ENCODE measurements at regions of chr10 and their contacts with region 1.

Region 1: GRCh38 chr10:117216611-117217195 is 19.4 kb downstream of the KCNK18 start:
- DNase-seq: peak; percentile 53 to 74 (median 60)
- H3K4me3 ChIP-seq: peak overlapping the region; percentile 63
- H3K4me3 Mint-ChIP-seq: peak overlapping the region; percentile 26 to 84 (median 72)
- H3K27ac ChIP-seq: no peak overlapping the region
- H3K27ac Mint-ChIP-seq: no peak overlapping the region
- H3K4me1 ChIP-seq: peaks cover 7% of the 10 kb centered on the region
- H3K4me1 Mint-ChIP-seq: peaks cover 0 to 18% (median 5%) of the 10 kb centered on the region in 3 donors
- H3K27me3 ChIP-seq: peaks cover 9% of the 10 kb centered on the region
- H3K27me3 Mint-ChIP-seq: peaks cover 15 to 31% of the 10 kb centered on the region in 2 donors

Region 2: GRCh38 chr10:117014835-117015234 is 201.9 kb before region 1 on chr10:
- CTCF ChIA-PET with region 1: no interaction called
- POLR2A ChIA-PET with region 1: no interaction called
- DNase-seq: no peak
- H3K4me3 ChIP-seq: no peak overlapping the region
- H3K4me3 Mint-ChIP-seq: no peak overlapping the region
- H3K27ac ChIP-seq: no peak overlapping the region
- H3K27ac Mint-ChIP-seq: no peak overlapping the region
- H3K4me1 ChIP-seq: no peaks in the 10 kb centered on the region
- H3K4me1 Mint-ChIP-seq: no peaks in the 10 kb centered on the region
- H3K27me3 ChIP-seq: no peaks in the 10 kb centered on the region
- H3K27me3 Mint-ChIP-seq: no peaks in the 10 kb centered on the region

Region 3: GRCh38 chr10:117131376-117132327 is 85.1 kb before region 1 on chr10:
- CTCF ChIA-PET with region 1: no interaction called
- POLR2A ChIA-PET with region 1: no interaction called
- DNase-seq: no peak
- H3K4me3 ChIP-seq: peak overlapping the region; percentile 22
- H3K4me3 Mint-ChIP-seq: peak overlapping the region in 6 of 7 donors; percentile 30 to 76 (median 64)
- H3K27ac ChIP-seq: no peak overlapping the region
- H3K27ac Mint-ChIP-seq: no peak overlapping the region
- H3K4me1 ChIP-seq: peaks cover 14% of the 10 kb centered on the region
- H3K4me1 Mint-ChIP-seq: peaks cover 24 to 44% (median 32%) of the 10 kb centered on the region in 3 donors
- H3K27me3 ChIP-seq: peaks cover 39% of the 10 kb centered on the region
- H3K27me3 Mint-ChIP-seq: peaks cover 75 to 85% of the 10 kb centered on the region in 2 donors

Region 4: DNA sequence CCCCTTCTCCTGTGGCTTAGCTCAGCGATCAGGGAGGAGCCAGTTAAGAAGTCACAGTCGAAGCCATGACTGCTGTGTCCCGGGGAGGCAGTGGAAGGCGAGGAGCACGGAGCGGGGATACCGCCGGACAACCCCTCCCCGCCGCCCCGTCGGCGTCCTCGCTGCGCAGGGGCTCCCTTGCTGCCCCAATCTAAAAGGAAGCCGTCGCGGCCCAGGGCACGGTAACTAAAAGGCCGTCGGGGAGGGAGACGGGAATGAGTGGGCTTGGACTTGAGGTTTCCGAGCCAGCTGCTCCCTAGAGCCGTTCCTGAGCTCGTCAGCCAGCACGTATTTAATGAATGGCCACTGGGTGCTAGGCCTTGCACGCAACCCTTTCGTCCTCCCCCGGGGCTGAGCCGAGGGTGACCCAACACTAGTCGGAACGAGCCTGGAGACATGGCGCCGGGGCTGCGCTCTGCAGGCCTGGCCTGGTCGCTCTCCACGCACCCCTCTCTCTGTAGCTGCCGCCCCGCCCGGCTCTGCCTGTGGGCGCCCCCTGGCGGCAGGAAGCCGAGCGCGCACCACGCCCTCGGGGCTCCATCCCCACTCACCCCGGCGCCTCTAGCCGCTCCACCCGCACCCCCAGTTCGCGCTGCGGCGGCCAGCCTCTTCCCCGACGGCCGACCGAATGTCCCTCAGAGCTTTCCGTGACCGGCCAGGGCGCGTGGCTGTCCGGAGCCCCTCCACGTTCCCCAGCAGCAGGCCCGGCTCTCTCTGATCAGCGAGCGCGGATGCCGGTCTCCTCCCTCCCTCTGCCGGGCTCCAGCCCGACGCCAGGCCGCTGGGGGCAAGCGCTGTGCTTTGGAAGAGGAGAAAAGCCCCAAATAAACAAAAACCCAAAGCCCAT is 48.7 kb before region 1 on chr10:
- CTCF ChIA-PET with region 1: interaction called, 11 read pairs
- POLR2A ChIA-PET with region 1: no interaction called
- DNase-seq: peak; percentile 39 to 68 (median 49)
- H3K4me3 ChIP-seq: peak overlapping the region; percentile 28
- H3K4me3 Mint-ChIP-seq: peak overlapping the region in 5 of 7 donors; percentile 45 to 88 (median 66)
- H3K27ac ChIP-seq: no peak overlapping the region
- H3K27ac Mint-ChIP-seq: no peak overlapping the region
- H3K4me1 ChIP-seq: peaks cover 13% of the 10 kb centered on the region
- H3K4me1 Mint-ChIP-seq: peaks cover 19 to 46% (median 30%) of the 10 kb centered on the region in 3 donors
- H3K27me3 ChIP-seq: peaks cover 71% of the 10 kb centered on the region
- H3K27me3 Mint-ChIP-seq: peaks cover 64 to 71% of the 10 kb centered on the region in 2 donors

Region 5: GRCh38 chr10:117204316-117204715 is 12.4 kb before region 1 on chr10:
- CTCF ChIA-PET with region 1: interaction called, 25 read pairs
- POLR2A ChIA-PET with region 1: no interaction called
- DNase-seq: no peak
- H3K4me3 ChIP-seq: no peak overlapping the region
- H3K4me3 Mint-ChIP-seq: no peak overlapping the region
- H3K27ac ChIP-seq: no peak overlapping the region
- H3K27ac Mint-ChIP-seq: no peak overlapping the region
- H3K4me1 ChIP-seq: no peaks in the 10 kb centered on the region
- H3K4me1 Mint-ChIP-seq: no peaks in the 10 kb centered on the region
- H3K27me3 ChIP-seq: no peaks in the 10 kb centered on the region
- H3K27me3 Mint-ChIP-seq: peaks cover 15 to 37% of the 10 kb centered on the region in 2 donors

Region 6: GRCh38 chr10:117226824-117227451 is 10.2 kb after region 1 on chr10:
- CTCF ChIA-PET with region 1: interaction called, 27 read pairs
- POLR2A ChIA-PET with region 1: no interaction called
- DNase-seq: no peak
- H3K4me3 ChIP-seq: no peak overlapping the region
- H3K4me3 Mint-ChIP-seq: no peak overlapping the region
- H3K27ac ChIP-seq: peak overlapping the region; percentile 2
- H3K27ac Mint-ChIP-seq: no peak overlapping the region
- H3K4me1 ChIP-seq: no peaks in the 10 kb centered on the region
- H3K4me1 Mint-ChIP-seq: no peaks in the 10 kb centered on the region
- H3K27me3 ChIP-seq: no peaks in the 10 kb centered on the region
- H3K27me3 Mint-ChIP-seq: peaks cover 34 to 45% of the 10 kb centered on the region in 2 donors

Region 7: DNA sequence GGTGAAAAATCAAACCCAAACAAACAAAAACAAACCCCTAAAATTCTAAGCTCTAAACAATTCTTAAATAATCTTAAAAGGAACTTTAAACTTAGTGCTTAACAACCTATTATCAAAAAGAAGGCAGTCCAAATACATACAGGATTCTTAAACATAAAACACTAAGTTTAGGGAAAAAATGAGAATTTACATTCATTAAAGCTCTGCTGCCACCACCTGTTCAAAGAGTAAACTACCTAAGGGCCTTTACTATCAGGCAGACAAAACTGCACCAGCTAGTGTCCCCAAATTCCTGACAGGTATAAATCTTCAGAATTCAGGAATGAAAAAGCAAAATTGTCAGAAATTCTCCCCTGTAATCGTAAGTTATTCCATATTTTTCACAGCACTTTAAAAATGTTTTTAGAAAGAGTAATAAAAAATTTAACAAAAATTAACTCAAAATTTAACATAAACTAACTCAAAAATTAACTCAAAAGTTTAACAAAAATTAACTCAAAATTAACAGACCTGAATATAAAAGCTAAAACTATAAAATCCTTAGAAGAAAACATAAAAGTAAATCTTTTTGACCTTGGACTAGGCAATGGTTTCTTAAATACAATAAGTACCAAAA is 103.5 kb after region 1 on chr10:
- CTCF ChIA-PET with region 1: interaction called, 24 read pairs
- POLR2A ChIA-PET with region 1: no interaction called
- DNase-seq: peak in 1 of 5 donors; percentile 5
- H3K4me3 ChIP-seq: no peak overlapping the region
- H3K4me3 Mint-ChIP-seq: no peak overlapping the region
- H3K27ac ChIP-seq: no peak overlapping the region
- H3K27ac Mint-ChIP-seq: peak overlapping the region in 1 of 8 donors; percentile 20
- H3K4me1 ChIP-seq: no peaks in the 10 kb centered on the region
- H3K4me1 Mint-ChIP-seq: peaks cover 16 to 47% (median 29%) of the 10 kb centered on the region in 3 donors
- H3K27me3 ChIP-seq: no peaks in the 10 kb centered on the region
- H3K27me3 Mint-ChIP-seq: no peaks in the 10 kb centered on the region

Region 8: DNA sequence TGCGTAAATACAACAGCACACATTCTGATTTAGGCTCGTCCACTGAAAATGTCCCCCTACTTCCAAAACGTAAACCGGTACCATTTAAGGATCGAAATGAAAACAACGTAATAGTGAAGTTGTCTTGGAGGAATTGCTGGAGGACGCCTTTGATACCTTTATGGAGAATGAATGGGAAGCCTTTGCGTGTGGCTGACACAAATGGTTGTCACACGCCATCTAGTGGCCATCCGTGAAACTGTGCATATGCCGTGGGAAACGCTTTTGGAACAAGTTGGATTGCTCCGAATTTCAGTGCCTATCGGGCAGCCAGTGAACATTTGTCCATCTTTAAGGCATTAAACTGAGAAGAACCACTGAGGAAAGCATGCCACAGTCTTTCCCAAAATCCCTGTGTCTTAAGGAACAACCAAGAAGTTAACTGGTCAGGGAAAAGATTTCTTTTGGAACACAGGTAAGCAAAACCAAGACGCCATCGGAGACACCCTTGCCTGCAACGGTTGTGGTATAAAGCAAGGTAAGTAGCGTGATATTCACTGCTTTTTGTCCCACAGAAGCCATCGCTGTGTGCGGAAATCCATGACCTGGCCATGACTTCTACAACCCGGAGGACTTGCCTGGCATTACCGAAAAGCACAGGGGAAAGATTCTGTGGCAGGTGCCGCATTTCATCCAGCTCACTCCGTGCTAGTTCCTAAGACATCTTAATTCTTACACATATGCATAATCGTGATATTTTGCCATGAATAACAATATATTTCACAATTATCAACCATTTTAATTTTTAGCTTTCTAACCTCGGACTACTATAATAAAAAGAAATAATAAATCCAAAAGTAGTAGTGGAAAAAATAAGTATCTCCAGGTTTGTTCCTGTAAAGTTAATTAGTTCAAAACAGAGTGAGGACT is 1024.8 kb after region 1 on chr10:
- CTCF ChIA-PET with region 1: interaction called, 18 read pairs
- POLR2A ChIA-PET with region 1: no interaction called
- DNase-seq: peak; percentile 26 to 71 (median 38)
- H3K4me3 ChIP-seq: no peak overlapping the region
- H3K4me3 Mint-ChIP-seq: no peak overlapping the region
- H3K27ac ChIP-seq: no peak overlapping the region
- H3K27ac Mint-ChIP-seq: no peak overlapping the region
- H3K4me1 ChIP-seq: no peaks in the 10 kb centered on the region
- H3K4me1 Mint-ChIP-seq: no peaks in the 10 kb centered on the region
- H3K27me3 ChIP-seq: peaks cover 17% of the 10 kb centered on the region
- H3K27me3 Mint-ChIP-seq: peaks cover 19 to 46% of the 10 kb centered on the region in 2 donors